ENCODE measurements at regions of chr1 and their contacts with region 1.

Region 1: GRCh38 chr1:29033829-29034466 is 89.8 kb downstream of the TMEM200B start:
- DNase-seq: peak in 1 of 2 experiments; percentile 67
- H3K4me3 ChIP-seq: no peak overlapping the region
- H3K4me1 ChIP-seq: no peaks in the 10 kb centered on the region
- H3K27me3 ChIP-seq: no peaks in the 10 kb centered on the region

Region 2: DNA sequence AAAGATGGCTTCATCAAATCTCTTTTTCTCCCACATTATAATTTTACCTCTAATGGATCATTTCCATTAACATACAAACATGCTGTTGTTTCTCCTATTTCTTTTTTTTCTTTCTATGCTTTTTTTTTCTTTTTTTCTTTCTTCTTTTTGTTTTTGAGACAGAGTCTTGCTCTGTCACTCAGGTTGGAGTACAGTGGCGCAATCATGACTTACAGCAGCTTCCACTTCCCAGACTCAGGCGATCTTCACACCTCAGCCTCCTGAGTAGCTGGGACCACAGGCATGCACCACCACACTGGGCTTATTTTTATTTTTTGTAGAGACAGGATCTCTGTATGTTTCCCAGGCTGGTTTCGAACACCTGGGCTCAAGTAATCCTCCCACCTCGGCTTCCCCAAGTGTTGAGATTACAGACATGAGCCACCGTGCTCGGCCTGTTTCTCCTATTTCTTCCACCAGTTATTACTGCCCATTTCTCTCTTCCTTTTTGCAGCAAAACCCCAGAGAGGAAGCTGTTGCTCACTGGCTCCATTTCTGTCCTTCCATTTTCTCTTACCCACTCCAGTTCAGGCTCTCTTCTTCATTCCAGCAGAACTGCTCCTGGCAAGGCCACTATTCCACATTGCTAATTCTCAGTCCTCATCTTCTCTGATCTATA is 254.1 kb before region 1 on chr1:
- in situ Hi-C with region 1: loop called (anchors 5 kb)
- DNase-seq: no peak
- H3K4me3 ChIP-seq: no peak overlapping the region
- H3K4me1 ChIP-seq: no peaks in the 10 kb centered on the region
- H3K27me3 ChIP-seq: no peaks in the 10 kb centered on the region

Measured in HAP-1 (cell line).